Panc1 (cell line): ENCODE measurements at regions of chrX and their contacts with region 1.

Region 1: GRCh38 chrX:50100188-50100587 is 100.6 kb downstream of the AKAP4 start:
- DNase-seq: no peak
- ATAC-seq: no peak
- H3K4me3 ChIP-seq: no peak overlapping the region
- H3K27ac ChIP-seq: no peak overlapping the region
- H3K4me1 ChIP-seq: no peaks in the 10 kb centered on the region
- H3K27me3 ChIP-seq: no peaks in the 10 kb centered on the region
- CTCF ChIP-seq: peak; percentile 46

Region 2: DNA sequence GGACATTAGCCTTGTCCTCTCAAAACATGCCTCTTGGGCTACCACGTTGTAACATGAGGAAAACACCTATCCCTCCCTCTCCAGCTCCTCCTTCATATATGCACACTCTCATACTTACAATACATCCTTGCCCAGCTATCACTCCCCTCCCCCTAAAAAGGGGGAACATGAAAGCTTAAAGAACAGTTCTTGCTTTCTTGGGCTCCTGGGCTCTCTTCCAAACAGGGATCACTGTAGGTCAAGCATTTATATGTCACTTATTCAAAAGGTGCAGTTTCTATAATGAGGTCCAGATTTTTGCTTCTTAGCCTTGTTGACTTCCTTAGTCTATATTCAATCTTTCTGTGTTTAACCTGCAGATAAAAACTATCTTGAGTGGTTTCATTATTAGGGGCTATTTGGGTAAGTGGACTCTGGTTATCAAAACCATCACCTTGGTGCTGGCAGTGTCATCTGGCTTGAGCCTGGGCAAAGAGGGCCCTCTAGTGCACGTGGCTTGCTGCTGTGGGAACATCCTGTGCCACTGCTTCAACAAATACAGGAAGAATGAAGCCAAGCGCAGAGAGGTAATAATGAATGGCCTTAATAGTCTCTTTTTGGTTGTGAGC is 18.8 kb before region 1 on chrX:
- CTCF ChIA-PET with region 1: no interaction called
- POLR2A ChIA-PET with region 1: no interaction called
- in situ Hi-C with region 1: no loop called
- intact Hi-C with region 1: no loop called
- DNase-seq: no peak
- ATAC-seq: peak; percentile 72; the same call in 1 of the 2 replicates
- H3K4me3 ChIP-seq: no peak overlapping the region
- H3K27ac ChIP-seq: no peak overlapping the region
- H3K4me1 ChIP-seq: no peaks in the 10 kb centered on the region
- H3K27me3 ChIP-seq: no peaks in the 10 kb centered on the region
- CTCF ChIP-seq: peak; percentile 60

Region 3: GRCh38 chrX:50204364-50204899 is 104.2 kb after region 1 on chrX and contains the start of gene CCNB3:
- CTCF ChIA-PET with region 1: interaction called, 3 read pairs
- POLR2A ChIA-PET with region 1: no interaction called
- in situ Hi-C with region 1: no loop called
- intact Hi-C with region 1: loop called (anchors 1 kb)
- DNase-seq: peak; percentile 36
- ATAC-seq: peak; percentile 93
- H3K4me3 ChIP-seq: peak within 1 kb of the TSS; percentile 32 to 38
- H3K27ac ChIP-seq: peak within 1 kb of the TSS; percentile 59
- H3K4me1 ChIP-seq: no peaks in the 10 kb centered on the region; the same call in 1 of the 2 replicates
- H3K27me3 ChIP-seq: no peaks in the 10 kb centered on the region
- CTCF ChIP-seq: peak; percentile 80
- total RNA-seq, gene CCNB3: 0.64 TPM

Region 4: DNA sequence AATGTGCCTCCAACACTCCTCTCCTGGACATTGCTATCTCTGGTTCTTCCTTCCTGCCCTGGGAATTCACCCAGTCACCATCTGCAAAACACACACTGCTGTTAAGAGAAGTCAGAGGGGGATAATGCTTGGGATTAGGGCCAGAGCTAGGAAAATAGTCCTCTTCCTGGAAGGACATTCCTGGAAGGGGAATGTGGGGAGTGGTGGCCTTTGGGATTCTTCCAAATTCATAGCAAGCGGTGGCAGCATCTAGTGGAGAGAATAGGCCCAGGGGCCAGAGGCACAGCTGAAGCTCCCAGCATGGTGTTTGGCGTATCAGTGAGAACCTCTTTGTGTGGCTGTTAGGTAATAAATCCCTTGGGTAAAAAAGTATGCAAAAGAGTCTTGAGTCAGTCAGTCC is 679.5 kb after region 1 on chrX:
- CTCF ChIA-PET with region 1: no interaction called
- POLR2A ChIA-PET with region 1: no interaction called
- in situ Hi-C with region 1: no loop called
- intact Hi-C with region 1: loop called (anchors 10 kb)
- DNase-seq: no peak
- ATAC-seq: no peak
- H3K4me3 ChIP-seq: no peak overlapping the region
- H3K27ac ChIP-seq: no peak overlapping the region
- H3K4me1 ChIP-seq: no peaks in the 10 kb centered on the region
- H3K27me3 ChIP-seq: no peaks in the 10 kb centered on the region
- CTCF ChIP-seq: no peak